ENCODE measurements at regions of chr6 and their contacts with region 1.

Region 1: GRCh38 chr6:30326526-30327260 is at the start of gene TRIM39:
- DNase-seq: peak; percentile 68 to 75
- ATAC-seq: peak; percentile 87 to 88
- H3K4me3 ChIP-seq: peak within 1 kb of the TSS; percentile 80 to 91 (median 88)
- H3K27ac ChIP-seq: peak within 1 kb of the TSS; percentile 94 to 98 (median 96)
- H3K4me1 ChIP-seq: peaks cover 25 to 32% of the 10 kb centered on the region in 2 donors
- H3K27me3 ChIP-seq: no peaks in the 10 kb centered on the region
- CTCF ChIP-seq: peak in 1 of 5 experiments; percentile 26
- POLR2A ChIP-seq: peak; percentile 81 to 87
- total RNA-seq, gene TRIM39: 12.3 to 21.5 (median 14.9) TPM

Region 2: DNA sequence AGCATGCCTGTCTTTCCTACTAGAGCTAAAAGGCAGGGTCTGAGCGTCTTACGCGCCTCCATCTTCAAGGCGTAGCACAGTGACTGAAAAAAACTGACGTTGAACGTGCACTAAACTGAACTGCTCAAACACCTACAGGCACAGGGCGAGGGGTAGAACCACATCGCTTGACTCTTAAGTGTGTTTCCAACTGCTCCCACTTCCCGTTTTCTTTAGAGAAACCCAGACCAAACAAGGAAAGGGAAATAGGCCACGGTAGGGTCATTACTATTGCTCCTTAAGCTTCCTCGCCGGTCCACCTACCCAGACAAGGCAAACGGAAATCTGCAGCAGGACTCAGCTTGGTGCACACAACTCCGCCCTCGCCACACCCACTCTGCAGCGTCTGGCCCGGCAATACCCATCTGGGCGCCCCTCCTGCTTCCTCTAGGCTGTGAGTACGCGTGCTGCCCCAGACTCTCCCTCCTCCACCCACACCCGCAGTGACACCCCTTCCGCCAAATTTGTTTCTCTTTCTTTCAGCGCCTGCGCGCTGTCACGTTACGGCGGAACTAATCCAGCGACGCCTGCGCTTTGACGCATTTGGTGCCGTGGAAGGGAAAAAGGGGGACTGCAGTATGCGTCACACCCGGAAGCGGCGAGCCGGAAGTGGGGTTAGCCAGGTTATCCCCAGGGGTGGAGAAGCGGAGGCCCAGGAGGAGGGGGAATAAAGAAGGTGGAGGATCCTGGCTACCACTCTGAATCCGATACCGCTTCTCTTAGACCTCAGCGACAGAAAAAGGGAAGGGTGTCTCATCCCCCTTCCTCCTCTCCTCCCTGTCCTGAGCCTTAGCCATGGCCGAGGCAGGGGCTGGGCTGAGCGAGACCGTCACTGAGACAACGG is 259.9 kb before region 1 on chr6 and contains the start of gene PPP1R11:
- in situ Hi-C with region 1: loop called in 2 of 4 experiments (anchors 25 kb)
- intact Hi-C with region 1: loop called (anchors 5 kb)
- DNase-seq: peak; percentile 97 to 98
- ATAC-seq: peak; percentile 95 to 96
- H3K4me3 ChIP-seq: peak within 1 kb of the TSS; percentile 79 to 95 (median 86)
- H3K27ac ChIP-seq: peak within 1 kb of the TSS; percentile 85 to 93 (median 90)
- H3K4me1 ChIP-seq: peaks cover 29 to 33% of the 10 kb centered on the region in 2 donors
- H3K27me3 ChIP-seq: peaks cover 9 to 16% (median 10%) of the 10 kb centered on the region in 3 donors
- CTCF ChIP-seq: peak in 1 of 5 experiments; percentile 8
- POLR2A ChIP-seq: peak; percentile 57 to 80
- total RNA-seq, gene PPP1R11: 34.0 to 72.4 (median 49.9) TPM

Region 3: GRCh38 chr6:30130887-30131862 is 195.5 kb before region 1 on chr6:
- in situ Hi-C with region 1: no loop called
- intact Hi-C with region 1: no loop called
- DNase-seq: peak; percentile 47 to 65
- ATAC-seq: peak; percentile 95 to 99
- H3K4me3 ChIP-seq: no peak overlapping the region
- H3K27ac ChIP-seq: no peak overlapping the region
- H3K4me1 ChIP-seq: peaks cover 4 to 10% of the 10 kb centered on the region in 2 donors
- H3K27me3 ChIP-seq: peaks cover 39 to 54% (median 46%) of the 10 kb centered on the region in 3 donors
- CTCF ChIP-seq: peak; percentile 77 to 98 (median 85)
- POLR2A ChIP-seq: no peak

Region 4: DNA sequence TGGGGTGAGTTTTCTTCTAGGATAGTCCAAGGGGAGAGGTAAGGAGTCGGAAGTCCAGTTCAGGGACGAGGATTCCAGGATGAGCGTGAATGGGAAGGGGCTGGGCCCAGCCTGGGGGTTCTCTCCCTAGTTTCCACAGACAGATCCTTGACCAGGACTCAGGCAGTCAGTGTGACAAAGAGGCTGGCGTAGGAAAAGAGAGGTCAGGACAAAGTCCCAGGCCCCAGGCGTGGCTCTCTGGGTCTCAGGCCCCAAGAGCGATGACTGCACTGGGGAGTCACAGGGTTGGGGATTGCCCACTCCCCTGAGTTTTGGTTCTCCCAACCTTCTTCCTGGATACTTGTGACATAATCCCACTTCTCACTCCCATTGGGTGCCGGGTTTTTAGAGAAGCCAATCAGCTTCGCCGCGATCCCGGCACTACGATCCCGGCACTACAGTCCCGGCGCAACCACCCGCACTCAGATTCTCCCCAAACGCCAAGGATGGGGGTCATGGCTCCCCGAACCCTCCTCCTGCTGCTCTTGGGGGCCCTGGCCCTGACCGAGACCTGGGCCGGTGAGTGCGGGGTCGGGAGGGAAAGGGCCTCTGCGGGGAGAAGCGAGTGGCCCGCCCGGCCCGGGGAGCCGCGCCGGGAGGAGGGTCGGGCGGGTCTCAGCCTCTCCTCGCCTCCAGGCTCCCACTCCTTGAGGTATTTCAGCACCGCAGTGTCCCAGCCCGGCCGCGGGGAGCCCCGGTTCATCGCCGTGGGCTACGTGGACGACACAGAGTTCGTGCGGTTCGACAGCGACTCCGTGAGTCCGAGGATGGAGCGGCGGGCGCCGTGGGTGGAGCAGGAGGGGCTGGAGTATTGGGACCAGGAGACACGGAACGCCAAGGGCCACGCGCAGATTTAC is 67.3 kb before region 1 on chr6:
- in situ Hi-C with region 1: no loop called
- intact Hi-C with region 1: no loop called
- DNase-seq: peak; percentile 50 to 59
- ATAC-seq: peak; percentile 95 to 96
- H3K4me3 ChIP-seq: peak overlapping the region; percentile 70 to 94 (median 84)
- H3K27ac ChIP-seq: peak overlapping the region; percentile 67 to 77 (median 72)
- H3K4me1 ChIP-seq: peaks cover 4 to 10% of the 10 kb centered on the region in 2 donors
- H3K27me3 ChIP-seq: no peaks in the 10 kb centered on the region
- CTCF ChIP-seq: peak in 2 of 5 experiments; percentile 9 to 28
- POLR2A ChIP-seq: peak; percentile 22 to 56

Region 5: DNA sequence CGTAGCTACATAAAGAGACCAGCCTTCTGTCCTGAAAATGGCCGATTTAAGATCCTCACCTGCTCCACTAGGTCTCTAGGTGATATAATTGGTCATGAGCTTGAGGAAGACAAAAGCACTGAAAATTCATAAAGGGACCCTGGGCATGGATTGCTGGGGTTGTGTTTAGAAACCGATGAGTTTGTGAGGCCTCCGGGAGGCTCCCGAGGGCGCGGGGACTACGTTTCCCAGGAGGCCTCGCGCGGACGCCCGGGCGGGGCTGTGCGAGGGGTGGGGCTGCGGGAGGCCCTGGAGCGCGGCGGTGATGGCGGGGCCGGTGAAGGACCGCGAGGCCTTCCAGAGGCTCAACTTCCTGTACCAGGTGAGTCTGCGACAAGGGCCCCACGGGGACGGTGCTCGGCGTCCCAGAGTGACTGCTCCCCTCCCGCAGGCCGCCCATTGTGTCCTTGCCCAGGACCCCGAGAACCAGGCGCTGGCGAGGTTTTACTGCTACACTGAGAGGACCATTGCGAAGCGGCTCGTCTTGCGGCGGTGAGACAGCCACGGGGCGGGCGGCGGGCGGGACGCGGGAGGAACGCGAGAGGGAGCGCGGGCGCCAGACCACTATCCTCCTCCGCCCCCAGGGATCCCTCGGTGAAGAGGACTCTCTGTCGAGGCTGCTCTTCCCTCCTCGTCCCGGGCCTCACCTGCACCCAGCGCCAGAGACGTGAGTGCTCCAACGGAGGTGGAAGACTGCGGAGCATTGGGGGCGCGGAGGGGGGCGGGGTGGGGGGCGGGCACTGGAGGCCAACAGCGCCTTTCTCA is 18.4 kb after region 1 on chr6 and contains the start of gene RPP21:
- in situ Hi-C with region 1: no loop called
- intact Hi-C with region 1: loop called (anchors 2 kb)
- DNase-seq: peak; percentile 70 to 74
- ATAC-seq: peak; percentile 95 to 97
- H3K4me3 ChIP-seq: peak within 1 kb of the TSS; percentile 81 to 99 (median 98)
- H3K27ac ChIP-seq: peak within 1 kb of the TSS; percentile 91 to 95 (median 94)
- H3K4me1 ChIP-seq: peaks cover 5 to 12% of the 10 kb centered on the region in 2 donors
- H3K27me3 ChIP-seq: no peaks in the 10 kb centered on the region
- CTCF ChIP-seq: no peak
- POLR2A ChIP-seq: peak; percentile 51 to 60
- total RNA-seq, gene RPP21: 44.5 to 103 (median 85.4) TPM

Measured in gastrocnemius medialis (tissue), 4 donors.